ENCODE measurements at regions of chr18 and their contacts with region 1.

Region 1: GRCh38 chr18:47724186-47724975 is 206.1 kb downstream of the SMAD2 start:
- ATAC-seq: no peak
- H3K4me3 ChIP-seq: no peak overlapping the region
- H3K27ac ChIP-seq: no peak overlapping the region
- H3K4me1 ChIP-seq: no peaks in the 10 kb centered on the region

Region 2: GRCh38 chr18:47601581-47602272 is 122.7 kb before region 1 on chr18:
- in situ Hi-C with region 1: loop called in 3 of 9 experiments (anchors 10 to 25 kb)
- ATAC-seq: peak in 5 of 8 experiments; percentile 52 to 71 (median 60)
- H3K4me3 ChIP-seq: no peak overlapping the region
- H3K27ac ChIP-seq: no peak overlapping the region
- H3K4me1 ChIP-seq: no peaks in the 10 kb centered on the region

Region 3: GRCh38 chr18:47842836-47843235 is 118.5 kb after region 1 on chr18:
- in situ Hi-C with region 1: no loop called
- ATAC-seq: peak in 1 of 8 experiments; percentile 87
- H3K4me3 ChIP-seq: no peak overlapping the region
- H3K27ac ChIP-seq: no peak overlapping the region
- H3K4me1 ChIP-seq: no peaks in the 10 kb centered on the region